ENCODE measurements at regions of chr14 and their contacts with region 1.

Region 1: DNA sequence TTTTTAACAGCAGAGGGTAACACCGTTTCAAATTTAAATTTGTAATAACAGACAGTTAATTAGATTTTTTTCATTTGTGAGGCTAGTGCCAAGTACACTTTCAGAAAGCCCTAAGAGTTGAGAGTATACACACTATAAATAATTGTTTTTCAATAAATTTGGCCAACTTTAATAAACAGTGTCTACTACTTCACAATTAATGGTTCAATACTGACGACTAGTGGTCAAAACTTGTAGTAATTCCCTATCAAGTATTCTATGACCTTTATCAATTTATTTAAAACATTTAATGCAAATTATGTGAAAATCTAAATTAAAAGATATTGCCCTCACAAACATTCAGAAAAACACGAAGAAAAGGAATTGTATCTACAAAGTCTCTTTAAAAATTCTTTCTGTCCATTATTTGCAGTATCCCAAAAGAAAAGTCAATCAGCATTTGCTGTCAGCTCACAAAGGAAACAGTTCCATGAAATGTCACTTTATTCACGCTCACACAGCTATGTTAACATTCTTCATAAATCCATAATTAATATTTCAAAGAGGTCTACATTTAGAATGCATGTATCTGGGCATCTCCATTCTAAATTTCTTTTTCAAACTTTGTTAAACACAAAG is 91.2 kb downstream of the CEP128 start:
- DNase-seq: peak; percentile 5 to 35 (median 7)
- ATAC-seq: peak; percentile 67
- H3K4me3 ChIP-seq: no peak overlapping the region
- H3K27ac ChIP-seq: no peak overlapping the region
- H3K4me1 ChIP-seq: no peaks in the 10 kb centered on the region
- H3K27me3 ChIP-seq: no peaks in the 10 kb centered on the region
- CTCF ChIP-seq: peak in 2 of 3 experiments; percentile 29 to 56; a peak in 4 of 6 replicates
- EP300 ChIP-seq: no peak
- POLR2A ChIP-seq: no peak
- RAD21 ChIP-seq: peak; percentile 60 to 68

Region 2: DNA sequence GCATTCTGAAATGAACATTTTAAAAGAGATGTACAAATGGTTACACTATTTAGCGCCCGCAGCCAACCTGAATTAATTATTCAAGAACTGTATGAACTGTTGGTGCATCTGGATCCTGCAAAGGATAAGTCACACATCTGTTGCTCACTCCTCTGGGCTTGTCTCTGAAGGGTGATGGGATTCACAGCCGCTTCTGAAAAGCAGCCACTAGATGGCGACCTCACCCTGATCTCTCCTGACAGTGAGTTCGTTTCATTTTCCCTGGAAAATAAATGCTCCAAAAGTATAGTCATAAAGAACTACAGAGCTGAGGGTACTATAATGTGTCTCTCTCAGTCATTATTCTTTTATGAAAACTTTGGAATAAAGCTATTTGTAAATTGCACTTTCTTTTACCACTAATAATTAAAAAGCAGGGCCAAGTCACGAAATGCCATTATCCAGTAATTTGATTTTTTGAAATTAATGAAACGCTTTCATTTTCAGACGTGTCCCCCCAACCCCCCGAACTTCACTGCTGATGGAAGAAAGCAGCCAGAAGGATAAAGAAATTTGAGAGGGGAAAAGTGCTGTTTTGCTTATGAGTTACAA is 1890.5 kb before region 1 on chr14:
- CTCF ChIA-PET with region 1: no interaction called
- POLR2A ChIA-PET with region 1: no interaction called
- in situ Hi-C with region 1: loop called (anchors 25 kb)
- intact Hi-C with region 1: no loop called
- DNase-seq: peak; percentile 28 to 54 (median 34)
- ATAC-seq: peak; percentile 64; the same call in 2 of the 3 replicates
- H3K4me3 ChIP-seq: no peak overlapping the region
- H3K27ac ChIP-seq: no peak overlapping the region
- H3K4me1 ChIP-seq: no peaks in the 10 kb centered on the region
- H3K27me3 ChIP-seq: no peaks in the 10 kb centered on the region
- CTCF ChIP-seq: peak; percentile 32 to 58 (median 53); a peak in 5 of 6 replicates
- EP300 ChIP-seq: no peak
- POLR2A ChIP-seq: no peak
- RAD21 ChIP-seq: peak in 1 of 2 experiments; percentile 54; a peak in 3 of 4 replicates

Region 3: DNA sequence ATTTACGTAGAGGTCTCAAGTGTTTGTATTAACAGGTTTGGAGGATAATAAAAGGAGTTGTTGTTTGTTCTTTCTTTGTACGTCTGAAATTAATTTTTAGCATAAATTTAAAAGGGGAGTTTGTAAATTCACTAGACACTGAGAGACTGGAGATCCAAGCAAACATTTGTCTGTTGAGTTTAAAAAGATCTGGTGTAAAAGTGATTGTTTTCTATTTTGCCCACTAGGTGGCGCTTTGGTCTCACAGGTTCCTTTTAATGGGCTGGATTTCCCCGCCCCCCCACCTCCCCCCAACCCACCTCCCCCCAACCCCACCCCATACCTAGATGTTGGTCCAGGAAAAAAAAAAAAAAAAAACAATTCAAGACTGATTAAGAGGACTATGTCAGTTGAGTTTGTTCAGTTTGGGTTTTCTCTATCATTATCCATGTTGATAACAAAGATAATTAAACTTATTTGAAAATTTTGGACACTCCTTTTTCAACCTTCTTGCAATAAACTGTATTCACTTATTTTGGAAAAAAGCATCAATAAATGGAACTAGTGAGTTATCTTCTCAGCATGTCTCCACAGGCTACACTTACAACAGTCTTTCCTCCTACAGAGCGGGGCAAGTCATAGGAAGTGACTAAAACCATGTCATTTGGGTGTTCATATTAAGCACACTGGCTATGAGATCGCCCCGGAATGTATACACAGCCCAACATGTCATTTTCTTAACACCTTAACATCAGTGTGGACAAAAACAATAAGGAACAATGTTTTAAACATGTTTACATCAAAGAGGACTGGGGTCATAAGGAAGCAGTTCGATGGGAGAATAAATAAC is 1839.0 kb before region 1 on chr14:
- CTCF ChIA-PET with region 1: no interaction called
- POLR2A ChIA-PET with region 1: no interaction called
- in situ Hi-C with region 1: no loop called
- intact Hi-C with region 1: loop called (anchors 5 kb)
- DNase-seq: peak; percentile 20 to 65 (median 54)
- ATAC-seq: no peak
- H3K4me3 ChIP-seq: no peak overlapping the region
- H3K27ac ChIP-seq: no peak overlapping the region
- H3K4me1 ChIP-seq: no peaks in the 10 kb centered on the region
- H3K27me3 ChIP-seq: no peaks in the 10 kb centered on the region
- CTCF ChIP-seq: peak in 1 of 3 experiments; percentile 31; a peak in 2 of 6 replicates
- EP300 ChIP-seq: no peak
- POLR2A ChIP-seq: no peak
- RAD21 ChIP-seq: peak in 1 of 2 experiments; percentile 23; a peak in 2 of 4 replicates

Region 4: GRCh38 chr14:80055667-80056496 is 794.4 kb before region 1 on chr14:
- CTCF ChIA-PET with region 1: no interaction called
- POLR2A ChIA-PET with region 1: no interaction called
- in situ Hi-C with region 1: no loop called
- intact Hi-C with region 1: loop called (anchors 10 kb)
- DNase-seq: peak in 3 of 4 experiments; percentile 1 to 5 (median 2)
- ATAC-seq: no peak
- H3K4me3 ChIP-seq: no peak overlapping the region
- H3K27ac ChIP-seq: no peak overlapping the region
- H3K4me1 ChIP-seq: no peaks in the 10 kb centered on the region
- H3K27me3 ChIP-seq: no peaks in the 10 kb centered on the region
- CTCF ChIP-seq: peak in 2 of 3 experiments; percentile 30 to 37; a peak in 2 of 6 replicates
- EP300 ChIP-seq: no peak
- POLR2A ChIP-seq: no peak
- RAD21 ChIP-seq: peak; percentile 39 to 50

Region 5: GRCh38 chr14:80664576-80664975 is 185.7 kb before region 1 on chr14:
- CTCF ChIA-PET with region 1: no interaction called
- POLR2A ChIA-PET with region 1: no interaction called
- in situ Hi-C with region 1: no loop called
- intact Hi-C with region 1: no loop called
- DNase-seq: no peak
- ATAC-seq: no peak
- H3K4me3 ChIP-seq: no peak overlapping the region
- H3K27ac ChIP-seq: no peak overlapping the region
- H3K4me1 ChIP-seq: no peaks in the 10 kb centered on the region
- H3K27me3 ChIP-seq: no peaks in the 10 kb centered on the region
- CTCF ChIP-seq: no peak
- EP300 ChIP-seq: no peak
- POLR2A ChIP-seq: no peak
- RAD21 ChIP-seq: no peak

Region 6: DNA sequence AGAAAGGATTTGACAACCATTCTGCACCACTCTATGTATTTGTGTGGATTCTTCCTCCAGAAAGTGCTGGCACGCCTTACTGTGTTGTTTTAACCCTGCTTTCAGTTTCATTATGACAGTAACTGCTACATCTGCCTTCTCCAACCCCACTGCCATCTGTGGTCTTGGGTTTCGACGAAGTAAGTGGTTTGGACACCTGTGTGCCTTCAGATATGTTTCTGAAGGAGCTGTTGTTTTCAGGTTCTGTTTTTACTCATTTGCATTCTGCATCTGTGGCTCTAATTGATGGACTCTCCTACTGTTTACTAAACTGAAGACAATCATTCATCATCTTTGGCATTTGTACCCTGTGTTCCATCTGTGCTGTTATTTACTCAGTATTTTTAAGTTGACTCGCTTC is 109.2 kb after region 1 on chr14:
- CTCF ChIA-PET with region 1: no interaction called
- POLR2A ChIA-PET with region 1: no interaction called
- in situ Hi-C with region 1: no loop called
- intact Hi-C with region 1: no loop called
- DNase-seq: no peak
- ATAC-seq: no peak
- H3K4me3 ChIP-seq: no peak overlapping the region
- H3K27ac ChIP-seq: no peak overlapping the region
- H3K4me1 ChIP-seq: peaks cover 0 to 9% of the 10 kb centered on the region in 2 experiments; a peak in 3 of 5 replicates
- H3K27me3 ChIP-seq: peaks cover 0 to 5% of the 10 kb centered on the region in 2 experiments; a peak in 1 of 5 replicates
- CTCF ChIP-seq: no peak
- EP300 ChIP-seq: no peak
- POLR2A ChIP-seq: no peak
- RAD21 ChIP-seq: no peak

Region 7: GRCh38 chr14:80987235-80988032 is 137.1 kb after region 1 on chr14:
- CTCF ChIA-PET with region 1: no interaction called
- POLR2A ChIA-PET with region 1: no interaction called
- in situ Hi-C with region 1: no loop called
- intact Hi-C with region 1: loop called (anchors 10 kb)
- DNase-seq: peak; percentile 47 to 66 (median 56)
- ATAC-seq: peak; percentile 82
- H3K4me3 ChIP-seq: no peak overlapping the region
- H3K27ac ChIP-seq: no peak overlapping the region
- H3K4me1 ChIP-seq: no peaks in the 10 kb centered on the region
- H3K27me3 ChIP-seq: no peaks in the 10 kb centered on the region; a peak in 1 of 5 replicates
- CTCF ChIP-seq: peak; percentile 51 to 76 (median 72); a peak in 5 of 6 replicates
- EP300 ChIP-seq: no peak
- POLR2A ChIP-seq: no peak
- RAD21 ChIP-seq: peak; percentile 59 to 73